Ascending aorta (tissue), 2 donors: ENCODE measurements at regions of chr4 and their contacts with region 1.

Region 1: DNA sequence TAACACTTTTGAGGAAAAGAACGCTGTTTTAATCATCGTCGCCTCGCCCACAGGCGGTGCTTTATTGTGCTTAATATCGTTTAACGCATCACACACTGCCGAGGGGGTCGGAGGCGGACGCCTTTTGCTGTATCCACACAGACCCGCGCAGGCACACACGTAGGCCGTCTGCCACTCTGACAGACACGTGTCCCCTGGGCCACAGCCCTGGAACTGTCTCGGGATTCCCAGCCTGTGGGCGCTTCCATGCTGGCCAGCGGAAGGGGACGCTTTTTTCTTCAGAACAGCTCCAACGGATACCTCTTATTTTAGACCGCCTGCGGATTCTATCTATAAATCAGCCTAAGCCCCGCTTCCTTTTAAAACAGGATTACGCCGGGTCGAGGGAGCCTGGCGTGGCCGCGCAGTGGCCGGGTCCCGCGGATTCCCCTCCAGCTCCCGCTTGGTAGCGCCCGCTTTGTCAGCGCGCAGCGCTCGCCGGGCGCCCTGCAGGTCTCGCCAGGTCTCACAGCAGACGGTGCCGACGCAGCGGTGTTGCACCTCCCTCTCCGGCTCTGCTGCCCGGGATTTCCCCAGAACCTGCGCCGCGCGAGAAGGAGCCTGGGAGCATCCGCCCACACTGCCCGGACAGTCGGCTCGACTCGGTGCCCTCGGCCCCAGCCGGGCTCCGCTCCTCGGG is at the start of gene NOCT:
- DNase-seq: peak; percentile 67 to 92
- H3K4me3 ChIP-seq: peak within 1 kb of the TSS; percentile 80 to 81
- H3K27ac ChIP-seq: peak within 1 kb of the TSS; percentile 83 to 96
- H3K4me1 ChIP-seq: peaks cover 0 to 8% of the 10 kb centered on the region in 2 donors
- H3K27me3 ChIP-seq: no peaks in the 10 kb centered on the region
- CTCF ChIP-seq: peak; percentile 13 to 32 (median 24)
- total RNA-seq, gene NOCT: 9.9 TPM

Region 2: DNA sequence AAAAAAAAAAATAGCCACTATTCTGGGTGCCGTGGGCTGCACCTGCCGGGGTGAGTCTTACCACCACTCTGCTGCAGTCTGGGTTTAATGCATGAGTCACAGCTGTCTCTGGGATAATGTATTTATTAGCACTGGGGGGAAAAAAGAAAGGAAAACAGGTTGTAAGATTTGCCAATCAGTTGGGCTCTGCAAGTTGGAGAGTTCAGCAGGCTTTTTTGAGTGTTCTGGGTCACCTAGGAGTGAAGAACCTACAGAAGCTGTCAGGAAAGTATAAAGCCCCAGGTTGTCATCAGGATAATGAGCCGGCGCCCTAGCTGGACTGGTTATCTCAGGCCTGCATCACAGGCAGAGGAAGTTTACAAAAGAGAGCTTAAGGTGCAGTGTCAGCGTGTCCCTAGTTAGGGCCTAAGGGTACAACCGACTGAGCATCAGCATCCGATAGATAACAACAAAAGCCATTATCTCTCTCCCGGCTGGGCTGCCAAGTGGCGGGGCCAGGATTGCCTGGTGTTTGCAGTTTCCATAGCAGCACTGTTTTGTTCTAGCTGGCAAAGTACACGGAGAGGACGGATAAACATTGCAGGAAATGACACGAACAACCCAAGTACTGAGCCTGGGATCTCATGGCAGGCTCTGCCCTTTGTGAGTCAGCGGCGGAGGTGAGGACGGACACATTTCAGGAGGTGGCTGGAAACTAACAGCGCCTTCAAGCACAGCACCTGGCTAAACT is 104.6 kb before region 1 on chr4:
- intact Hi-C with region 1: loop called (anchors 1 kb)
- DNase-seq: peak; percentile 21 to 80
- H3K4me3 ChIP-seq: no peak overlapping the region
- H3K27ac ChIP-seq: no peak overlapping the region
- H3K4me1 ChIP-seq: no peaks in the 10 kb centered on the region
- H3K27me3 ChIP-seq: no peaks in the 10 kb centered on the region
- CTCF ChIP-seq: no peak

Region 3: DNA sequence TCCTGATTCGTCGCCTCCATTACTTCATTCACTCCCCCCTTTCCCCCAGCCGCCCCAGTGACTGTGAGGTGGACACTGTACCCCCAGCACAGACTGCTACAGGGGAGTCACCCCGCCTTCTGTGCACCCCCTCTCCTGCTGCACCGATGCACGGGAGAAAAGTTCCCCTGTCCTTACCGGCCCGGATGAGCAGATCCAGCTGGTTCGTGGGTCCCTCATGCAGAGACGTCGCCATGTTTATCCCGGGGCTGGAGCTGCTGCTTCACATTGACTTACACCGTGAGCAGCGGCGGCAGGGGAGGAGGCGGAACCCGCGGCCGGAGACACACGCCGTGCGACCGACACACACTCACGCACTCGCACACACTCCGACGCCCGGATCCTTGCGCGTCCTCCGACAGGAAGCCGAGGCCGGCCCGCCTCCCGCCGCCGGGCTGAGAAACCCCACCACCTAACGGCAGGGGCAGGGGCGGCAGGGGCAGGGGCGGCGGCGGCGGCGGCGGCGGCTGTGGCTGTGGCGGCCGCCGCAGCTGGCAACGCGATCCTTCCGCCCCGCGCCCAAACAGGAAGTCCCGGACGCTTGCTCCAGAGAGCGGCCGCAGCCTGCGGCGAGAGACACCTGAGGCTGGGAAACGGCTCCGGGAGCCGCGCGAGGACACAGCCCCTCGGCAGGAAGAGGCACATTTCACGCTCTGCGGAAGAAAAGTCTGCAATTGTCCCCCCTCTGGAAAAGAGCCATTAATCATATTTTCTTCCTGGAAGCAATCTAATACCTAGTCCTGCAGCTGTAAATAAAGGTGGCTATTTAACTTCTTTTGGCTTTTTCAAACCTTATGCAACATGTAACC is 68.8 kb after region 1 on chr4:
- intact Hi-C with region 1: loop called (anchors 1 kb)
- DNase-seq: peak; percentile 60 to 93
- H3K4me3 ChIP-seq: peak overlapping the region; percentile 83 to 92
- H3K27ac ChIP-seq: peak overlapping the region; percentile 81 to 97
- H3K4me1 ChIP-seq: peaks cover 0 to 6% of the 10 kb centered on the region in 2 donors
- H3K27me3 ChIP-seq: no peaks in the 10 kb centered on the region
- CTCF ChIP-seq: peak in 2 of 3 experiments; percentile 25 to 40

Region 4: GRCh38 chr4:139243448-139244365 is 228.3 kb after region 1 on chr4:
- intact Hi-C with region 1: loop called (anchors 2 kb)
- DNase-seq: peak in 1 of 2 donors; percentile 80
- H3K4me3 ChIP-seq: peak overlapping the region in 1 of 2 donors; percentile 7
- H3K27ac ChIP-seq: peak overlapping the region; percentile 78 to 90
- H3K4me1 ChIP-seq: peaks cover 4 to 20% of the 10 kb centered on the region in 2 donors
- H3K27me3 ChIP-seq: no peaks in the 10 kb centered on the region
- CTCF ChIP-seq: no peak

Region 5: GRCh38 chr4:139295206-139295941 is 280.0 kb after region 1 on chr4:
- intact Hi-C with region 1: loop called (anchors 2 kb)
- DNase-seq: peak; percentile 79 to 99
- H3K4me3 ChIP-seq: peak overlapping the region; percentile 85 to 87
- H3K27ac ChIP-seq: peak overlapping the region; percentile 76 to 78
- H3K4me1 ChIP-seq: peaks cover 0 to 27% of the 10 kb centered on the region in 2 donors
- H3K27me3 ChIP-seq: no peaks in the 10 kb centered on the region
- CTCF ChIP-seq: peak; percentile 93 to 95 (median 94)